Right ventricle myocardium superior (tissue), 1 donor: ENCODE measurements at regions of chr1 and their contacts with region 1.

Region 1: GRCh38 chr1:116674011-116674531 is 6.5 kb upstream of the IGSF3 start:
- DNase-seq: no peak
- ATAC-seq: no peak

Region 2: DNA sequence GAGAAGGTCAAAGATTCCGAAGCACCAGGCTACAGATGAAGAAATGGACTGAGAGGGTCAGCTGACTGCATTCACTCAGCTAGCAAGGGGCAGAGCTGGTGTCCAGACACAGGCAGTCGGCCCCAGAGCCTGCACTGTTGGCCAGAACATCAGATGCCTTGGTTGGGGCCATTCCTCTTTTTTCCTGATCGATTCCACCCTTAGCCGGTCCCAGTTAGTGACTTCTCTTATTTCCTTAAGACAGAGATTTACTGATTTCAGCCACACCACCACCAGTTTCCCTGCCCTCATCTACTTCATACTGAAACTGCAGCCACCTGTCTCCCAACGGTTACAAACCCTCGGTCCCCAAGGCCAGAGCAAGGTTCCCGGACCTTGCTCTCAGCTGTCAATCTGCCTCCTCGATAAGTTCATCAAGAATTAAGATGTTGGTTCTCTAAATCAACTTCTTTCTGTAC is 114.7 kb before region 1 on chr1:
- intact Hi-C with region 1: no loop called
- DNase-seq: no peak
- ATAC-seq: no peak

Region 3: DNA sequence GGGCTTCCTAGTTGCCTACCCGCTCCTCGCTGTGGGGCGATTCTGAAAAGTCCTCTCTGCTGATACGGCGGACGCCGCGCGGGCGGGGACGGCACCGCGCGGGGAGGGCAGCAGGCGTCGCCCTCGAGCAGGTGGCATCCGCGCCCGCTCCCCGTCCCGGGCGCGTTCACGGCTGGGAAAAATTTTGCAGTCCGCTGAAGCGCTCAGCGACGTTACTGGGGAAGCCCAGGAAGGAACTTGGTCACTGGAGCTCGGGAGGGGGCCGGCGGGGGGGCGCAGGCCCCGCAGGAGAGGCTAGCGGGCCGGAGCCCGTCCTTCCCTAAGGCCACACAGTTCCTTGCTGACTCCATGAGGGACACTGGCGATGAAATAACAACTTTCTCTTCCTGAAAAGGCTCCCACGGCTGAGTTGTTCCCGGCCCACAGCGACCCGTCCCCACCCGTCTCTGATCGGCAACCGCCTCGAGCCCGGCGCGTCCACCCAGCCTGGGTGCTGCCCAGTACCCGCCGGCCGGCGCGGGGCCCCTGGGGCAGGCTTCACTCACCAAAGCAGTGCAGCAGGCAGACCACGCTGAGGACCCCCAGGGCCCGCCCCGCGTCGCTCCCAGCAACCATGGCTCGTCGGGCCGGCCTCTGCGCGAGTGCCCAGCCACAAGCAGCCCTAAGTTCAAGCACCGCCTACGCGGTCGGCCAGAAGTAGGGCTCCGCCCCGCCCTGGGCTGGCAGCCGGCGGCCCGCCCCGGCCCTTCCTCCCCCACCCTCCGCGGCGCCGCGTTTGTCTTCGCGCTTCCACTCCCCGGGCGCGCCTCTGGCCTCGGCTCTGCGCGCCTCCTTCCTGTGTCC is 103.5 kb before region 1 on chr1 and contains the start of gene CD58:
- intact Hi-C with region 1: loop called (anchors 5 kb)
- DNase-seq: peak; percentile 96
- ATAC-seq: peak; percentile 94
- total RNA-seq, gene CD58: 31.3 TPM